CD4-positive, alpha-beta memory T cell (primary cell): ENCODE measurements at regions of chr5 and their contacts with region 1.

Region 1: GRCh38 chr5:129884322-129884721 is 19.9 kb upstream of the CHSY3 start:
- DNase-seq: no peak
- H3K4me3 ChIP-seq: no peak overlapping the region
- H3K4me3 Mint-ChIP-seq: no peak overlapping the region
- H3K27ac ChIP-seq: no peak overlapping the region
- H3K27ac Mint-ChIP-seq: no peak overlapping the region
- H3K4me1 ChIP-seq: no peaks in the 10 kb centered on the region
- H3K4me1 Mint-ChIP-seq: no peaks in the 10 kb centered on the region
- H3K27me3 ChIP-seq: no peaks in the 10 kb centered on the region
- H3K27me3 Mint-ChIP-seq: no peaks in the 10 kb centered on the region

Region 2: DNA sequence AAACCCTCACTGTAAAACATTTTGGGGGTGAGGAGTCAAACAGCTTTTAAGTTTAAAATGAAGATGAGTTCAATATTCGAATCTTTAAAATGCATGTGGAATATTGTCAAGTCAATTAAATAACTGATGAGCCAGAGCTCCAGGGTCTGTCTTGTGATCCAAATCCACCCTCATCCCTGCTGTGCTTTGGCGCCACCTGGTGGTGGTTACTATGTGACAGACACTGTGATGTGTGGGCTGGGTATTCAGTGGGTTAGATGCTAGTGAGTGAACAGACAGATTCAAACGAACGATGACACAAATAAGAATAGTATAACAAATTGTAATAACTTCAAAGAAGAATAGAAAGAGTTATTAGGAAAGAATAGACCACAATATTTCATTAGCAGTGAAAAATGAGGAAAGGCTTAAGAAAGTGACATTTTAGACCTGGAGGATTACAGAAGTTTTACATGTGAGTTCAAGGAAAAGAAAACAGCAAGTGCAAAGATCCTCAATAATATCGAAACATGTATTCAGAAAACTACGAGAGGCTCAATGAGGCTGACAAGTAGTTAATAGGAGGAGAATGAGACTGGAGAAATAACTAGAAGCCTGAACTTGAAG is 31.5 kb before region 1 on chr5:
- CTCF ChIA-PET with region 1: interaction called, 14 read pairs
- POLR2A ChIA-PET with region 1: no interaction called
- intact Hi-C with region 1: no loop called
- DNase-seq: peak; percentile 34 to 45 (median 43)
- H3K4me3 ChIP-seq: no peak overlapping the region
- H3K4me3 Mint-ChIP-seq: no peak overlapping the region
- H3K27ac ChIP-seq: no peak overlapping the region
- H3K27ac Mint-ChIP-seq: no peak overlapping the region
- H3K4me1 ChIP-seq: no peaks in the 10 kb centered on the region
- H3K4me1 Mint-ChIP-seq: peaks cover 0 to 1% (median 0%) of the 10 kb centered on the region in 4 donors
- H3K27me3 ChIP-seq: no peaks in the 10 kb centered on the region
- H3K27me3 Mint-ChIP-seq: peaks cover under 1 to 3% of the 10 kb centered on the region in 2 donors

Region 3: GRCh38 chr5:129945028-129945427 is 60.7 kb after region 1 on chr5:
- CTCF ChIA-PET with region 1: no interaction called
- POLR2A ChIA-PET with region 1: no interaction called
- intact Hi-C with region 1: no loop called
- DNase-seq: no peak
- H3K4me3 ChIP-seq: no peak overlapping the region
- H3K4me3 Mint-ChIP-seq: no peak overlapping the region
- H3K27ac ChIP-seq: no peak overlapping the region
- H3K27ac Mint-ChIP-seq: no peak overlapping the region
- H3K4me1 ChIP-seq: no peaks in the 10 kb centered on the region
- H3K4me1 Mint-ChIP-seq: no peaks in the 10 kb centered on the region
- H3K27me3 ChIP-seq: no peaks in the 10 kb centered on the region
- H3K27me3 Mint-ChIP-seq: peaks cover 0 to 3% of the 10 kb centered on the region in 2 donors

Region 4: DNA sequence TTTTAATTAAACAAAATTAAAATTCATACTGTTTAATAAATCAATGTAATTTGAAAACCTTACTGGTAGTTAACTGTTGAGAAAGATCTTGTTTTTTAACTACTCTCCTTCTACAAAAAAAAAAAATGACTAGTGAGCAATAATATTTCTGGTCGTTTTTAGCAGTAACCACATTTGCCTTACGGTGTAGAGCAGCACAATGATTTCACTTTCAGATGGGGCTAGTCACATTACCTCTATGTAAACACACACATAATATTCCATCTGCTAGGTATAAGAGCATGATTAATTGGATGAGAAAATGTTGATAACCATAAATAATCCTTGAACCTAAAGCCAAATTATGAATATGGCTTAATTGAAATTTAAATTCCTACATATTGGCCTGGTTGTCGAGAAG is 218.1 kb after region 1 on chr5:
- CTCF ChIA-PET with region 1: no interaction called
- POLR2A ChIA-PET with region 1: no interaction called
- intact Hi-C with region 1: no loop called
- DNase-seq: no peak
- H3K4me3 ChIP-seq: no peak overlapping the region
- H3K4me3 Mint-ChIP-seq: no peak overlapping the region
- H3K27ac ChIP-seq: no peak overlapping the region
- H3K27ac Mint-ChIP-seq: no peak overlapping the region
- H3K4me1 ChIP-seq: no peaks in the 10 kb centered on the region
- H3K4me1 Mint-ChIP-seq: no peaks in the 10 kb centered on the region
- H3K27me3 ChIP-seq: no peaks in the 10 kb centered on the region
- H3K27me3 Mint-ChIP-seq: peaks cover 0 to 3% of the 10 kb centered on the region in 2 donors